ENCODE measurements at regions of chr18 and their contacts with region 1.

Region 1: GRCh38 chr18:24413148-24413547 is 13.3 kb upstream of the IMPACT start:
- DNase-seq: no peak
- ATAC-seq: peak in 1 of 4 donors; percentile 38
- H3K4me3 ChIP-seq: no peak overlapping the region
- H3K27ac ChIP-seq: no peak overlapping the region
- H3K4me1 ChIP-seq: no peaks in the 10 kb centered on the region
- H3K27me3 ChIP-seq: peaks cover 0 to 14% (median 0%) of the 10 kb centered on the region in 9 donors
- CTCF ChIP-seq: peak in 8 of 12 donors; percentile 18 to 46 (median 38)
- POLR2A ChIP-seq: no peak

Region 2: DNA sequence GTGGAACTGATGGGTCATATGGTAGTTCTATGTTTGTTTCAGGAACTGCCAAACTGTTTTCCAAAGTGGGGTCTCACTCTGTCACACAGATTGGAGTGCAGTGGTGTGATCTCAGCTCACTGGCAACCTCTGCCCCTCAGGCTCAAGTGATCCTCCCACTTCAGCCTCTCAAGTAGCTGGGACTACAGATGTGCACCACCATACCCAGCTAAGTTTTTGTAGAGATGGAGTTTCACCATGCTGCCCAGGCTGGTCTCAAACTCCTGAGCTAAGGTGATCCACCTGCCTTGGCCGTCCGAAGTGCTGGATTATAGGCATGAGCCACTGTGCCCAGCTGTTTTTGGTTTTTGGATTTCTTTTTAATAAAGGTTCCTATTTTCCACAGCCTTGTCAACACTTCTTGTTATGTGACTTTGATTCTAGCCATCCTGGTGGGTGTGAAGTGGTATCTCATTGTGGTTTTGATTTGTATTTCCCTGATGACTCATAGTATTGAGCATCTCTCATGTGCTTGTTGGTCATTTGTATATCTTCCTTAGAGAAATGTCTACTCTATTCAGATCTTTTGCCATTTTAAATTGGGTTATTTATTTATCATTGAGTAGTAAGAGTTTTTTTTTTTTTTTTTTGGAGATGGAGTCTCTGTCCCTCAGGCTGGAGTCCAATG is 849.6 kb before region 1 on chr18:
- intact Hi-C with region 1: no loop called
- DNase-seq: no peak
- ATAC-seq: no peak
- H3K4me3 ChIP-seq: no peak overlapping the region
- H3K27ac ChIP-seq: no peak overlapping the region
- H3K4me1 ChIP-seq: peaks cover 0 to 11% (median 0%) of the 10 kb centered on the region in 12 donors
- H3K27me3 ChIP-seq: no peaks in the 10 kb centered on the region
- CTCF ChIP-seq: no peak
- POLR2A ChIP-seq: no peak

Region 3: DNA sequence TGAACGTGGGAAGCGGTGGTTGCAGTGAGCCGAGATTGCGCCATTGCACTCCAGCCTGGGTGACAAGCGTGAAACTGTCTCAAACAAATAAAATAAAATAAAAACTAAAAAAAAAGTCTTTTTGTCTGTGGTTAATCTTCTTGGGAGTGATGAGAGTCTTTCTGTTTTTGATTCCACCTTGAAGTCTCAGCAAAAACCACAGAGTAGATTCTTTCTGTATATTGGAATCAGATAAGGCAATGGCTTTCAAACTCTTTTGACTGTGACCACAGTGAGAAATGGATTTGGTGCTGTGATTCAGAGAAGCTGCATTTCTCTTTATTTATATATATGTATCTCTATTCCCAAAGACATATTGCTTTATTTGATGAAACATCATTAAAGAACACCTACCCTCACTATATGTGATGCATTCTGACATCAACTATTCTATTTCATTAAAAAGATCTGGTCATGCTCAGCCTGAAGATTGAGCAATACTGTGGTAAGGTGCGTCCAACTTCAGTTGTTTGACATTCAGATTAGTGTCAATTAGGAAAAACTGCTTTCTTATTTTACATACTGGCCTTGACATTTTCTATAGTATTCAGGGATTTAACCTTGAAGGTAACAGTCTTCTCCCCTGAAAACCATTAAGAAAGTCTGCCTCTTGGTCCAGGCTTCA is 62.9 kb after region 1 on chr18:
- intact Hi-C with region 1: loop called in 1 of 10 experiments (anchors 10 kb)
- DNase-seq: no peak
- ATAC-seq: no peak
- H3K4me3 ChIP-seq: no peak overlapping the region
- H3K27ac ChIP-seq: no peak overlapping the region
- H3K4me1 ChIP-seq: no peaks in the 10 kb centered on the region
- H3K27me3 ChIP-seq: no peaks in the 10 kb centered on the region
- CTCF ChIP-seq: no peak
- POLR2A ChIP-seq: no peak

Region 4: DNA sequence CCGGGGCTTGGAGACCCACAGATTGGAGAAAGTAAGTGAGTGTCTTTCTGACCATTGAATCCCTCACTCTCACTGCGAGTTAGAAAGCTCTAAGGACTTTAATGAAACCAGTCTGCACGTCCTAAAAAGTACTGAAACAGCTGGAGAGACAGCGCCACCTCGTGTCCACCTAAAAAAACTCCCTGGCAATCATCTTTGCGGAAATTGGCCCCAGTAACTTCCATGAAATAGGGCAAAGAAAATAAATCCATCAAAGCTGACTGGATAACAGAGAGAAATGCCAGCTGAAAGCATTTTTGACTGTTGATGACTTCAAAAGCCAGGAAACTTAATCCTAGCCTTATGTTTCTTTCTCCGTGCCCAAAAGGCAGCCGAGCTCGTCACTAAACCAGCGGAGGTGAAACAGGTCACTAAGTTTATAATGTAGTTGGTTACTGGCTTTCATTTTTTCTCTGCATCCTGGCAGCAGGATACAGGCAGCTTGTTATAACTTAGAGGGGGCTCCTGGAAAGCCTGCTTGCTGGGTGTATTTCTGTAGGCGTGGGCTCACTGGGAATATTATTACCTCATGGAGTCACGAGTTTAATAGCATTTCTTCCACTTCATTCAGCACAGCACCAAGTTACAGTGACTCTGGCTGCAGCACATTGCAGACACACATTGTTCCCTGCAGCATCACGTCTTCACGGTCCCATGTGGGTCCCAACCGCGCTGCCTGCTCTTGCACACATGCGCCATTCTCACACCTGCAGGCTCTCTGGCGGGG is 313.8 kb after region 1 on chr18:
- intact Hi-C with region 1: no loop called
- DNase-seq: peak in 4 of 5 donors; percentile 56 to 72 (median 59)
- ATAC-seq: peak; percentile 36 to 78 (median 62)
- H3K4me3 ChIP-seq: peak overlapping the region in 8 of 12 donors; percentile 14 to 47 (median 26)
- H3K27ac ChIP-seq: peak overlapping the region in 2 of 12 donors; percentile 25 to 50
- H3K4me1 ChIP-seq: peaks cover 0 to 9% (median 0%) of the 10 kb centered on the region in 12 donors
- H3K27me3 ChIP-seq: peaks cover 0 to 9% (median 0%) of the 10 kb centered on the region in 9 donors
- CTCF ChIP-seq: peak; percentile 69 to 89 (median 83)
- POLR2A ChIP-seq: no peak